ENCODE measurements at regions of chr5 and their contacts with region 1.

Region 1: DNA sequence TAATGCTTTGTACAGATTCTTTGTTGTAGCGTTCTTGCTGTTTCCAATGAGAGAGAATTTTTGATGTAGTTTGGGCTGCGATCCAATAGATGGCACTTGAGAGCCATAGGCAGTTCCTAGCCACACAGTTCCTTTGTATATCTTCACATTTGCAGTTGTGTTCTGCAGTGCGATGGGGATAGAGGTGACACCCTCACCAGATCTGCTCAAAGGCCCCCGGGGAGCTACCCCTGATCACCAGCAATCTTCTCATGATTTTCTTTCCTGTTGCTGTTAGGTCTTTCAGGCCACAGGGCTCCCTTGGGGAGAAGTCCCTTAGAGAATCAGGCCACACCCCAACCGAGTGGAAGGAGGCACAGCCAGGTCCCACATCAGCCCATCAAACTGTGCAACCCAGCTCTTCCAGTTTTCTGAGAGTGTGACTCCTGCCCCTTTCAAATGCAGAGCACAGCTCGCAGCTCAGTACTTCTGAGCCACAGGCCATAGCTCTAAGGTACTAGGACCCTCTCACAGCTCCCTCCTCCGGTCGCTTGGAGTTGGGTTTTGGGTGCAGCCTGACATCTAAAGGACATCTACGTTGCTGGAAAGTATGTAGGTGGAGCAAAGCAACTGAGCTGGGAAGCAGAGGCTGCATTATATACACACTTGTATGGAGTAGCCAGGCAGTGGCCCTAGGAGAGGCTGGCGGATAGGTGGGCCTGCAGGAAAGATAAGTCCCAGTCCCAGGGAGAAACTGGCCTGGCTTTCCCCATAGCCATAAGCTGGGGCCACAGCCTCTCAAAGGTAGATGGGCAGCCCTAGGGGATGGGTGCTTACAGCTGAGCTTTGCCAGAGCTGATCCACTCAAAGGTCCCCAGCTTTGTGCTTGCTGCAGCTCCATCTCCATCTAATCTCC is 353.5 kb downstream of the SLCO4C1 start:
- DNase-seq: no peak
- ATAC-seq: peak; percentile 42
- H3K4me3 ChIP-seq: no peak overlapping the region
- H3K4me3 Mint-ChIP-seq: no peak overlapping the region
- H3K27ac ChIP-seq: no peak overlapping the region
- H3K27ac Mint-ChIP-seq: no peak overlapping the region
- H3K4me1 ChIP-seq: no peaks in the 10 kb centered on the region
- H3K4me1 Mint-ChIP-seq: peaks cover 0 to 5% (median 0%) of the 10 kb centered on the region in 7 donors
- H3K27me3 ChIP-seq: no peaks in the 10 kb centered on the region
- H3K27me3 Mint-ChIP-seq: peaks cover 0 to 11% (median 0%) of the 10 kb centered on the region in 5 donors

Region 2: GRCh38 chr5:101929628-101930027 is 12.9 kb before region 1 on chr5:
- CTCF ChIA-PET with region 1: no interaction called
- POLR2A ChIA-PET with region 1: no interaction called
- intact Hi-C with region 1: no loop called
- DNase-seq: no peak
- ATAC-seq: no peak
- H3K4me3 ChIP-seq: no peak overlapping the region
- H3K4me3 Mint-ChIP-seq: no peak overlapping the region
- H3K27ac ChIP-seq: no peak overlapping the region
- H3K27ac Mint-ChIP-seq: no peak overlapping the region
- H3K4me1 ChIP-seq: no peaks in the 10 kb centered on the region
- H3K4me1 Mint-ChIP-seq: no peaks in the 10 kb centered on the region
- H3K27me3 ChIP-seq: no peaks in the 10 kb centered on the region
- H3K27me3 Mint-ChIP-seq: no peaks in the 10 kb centered on the region

Region 3: GRCh38 chr5:101977729-101978345 is 35.3 kb after region 1 on chr5:
- CTCF ChIA-PET with region 1: interaction called, 3 read pairs
- POLR2A ChIA-PET with region 1: no interaction called
- intact Hi-C with region 1: loop called in 1 of 2 experiments (anchors 1 kb)
- DNase-seq: peak in 3 of 9 donors; percentile 6 to 25 (median 9)
- ATAC-seq: no peak
- H3K4me3 ChIP-seq: no peak overlapping the region
- H3K4me3 Mint-ChIP-seq: no peak overlapping the region
- H3K27ac ChIP-seq: no peak overlapping the region
- H3K27ac Mint-ChIP-seq: no peak overlapping the region
- H3K4me1 ChIP-seq: no peaks in the 10 kb centered on the region
- H3K4me1 Mint-ChIP-seq: no peaks in the 10 kb centered on the region
- H3K27me3 ChIP-seq: no peaks in the 10 kb centered on the region
- H3K27me3 Mint-ChIP-seq: peaks cover 0 to 4% (median 0%) of the 10 kb centered on the region in 5 donors

Region 4: DNA sequence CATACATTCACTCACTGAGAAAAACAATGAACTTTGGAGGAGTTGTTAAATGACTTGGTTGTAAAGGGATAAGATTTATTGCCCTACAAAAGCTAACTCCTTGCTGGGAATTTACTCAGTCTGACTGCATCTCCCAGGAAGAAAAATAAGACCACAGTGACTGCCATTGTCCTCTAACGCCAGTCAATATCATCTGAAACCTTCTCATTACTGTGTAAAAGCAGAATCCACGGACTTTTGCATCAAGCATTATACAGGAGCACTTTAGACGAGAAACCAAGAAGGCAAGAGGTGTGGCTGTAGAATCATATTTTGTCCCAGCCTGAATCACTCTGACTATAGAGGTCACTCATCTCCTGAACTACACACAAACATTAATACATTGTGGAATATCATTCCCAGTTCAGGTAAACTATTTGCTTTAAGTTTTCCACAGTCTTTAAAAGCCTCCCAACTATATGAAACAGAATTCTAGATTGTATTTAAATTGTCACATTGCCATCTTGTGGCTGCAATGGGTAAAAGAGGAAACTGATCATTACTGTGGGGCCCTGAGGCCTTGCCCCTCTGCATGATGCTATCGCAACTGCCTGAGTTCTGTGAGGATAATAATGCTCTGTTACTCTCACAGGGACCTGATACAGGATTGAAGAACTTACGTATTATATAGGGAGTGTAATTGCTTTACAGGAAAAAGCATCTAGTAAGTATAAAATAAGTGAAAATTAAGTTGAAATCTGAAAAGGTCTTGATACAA is 210.6 kb after region 1 on chr5:
- CTCF ChIA-PET with region 1: no interaction called
- POLR2A ChIA-PET with region 1: no interaction called
- intact Hi-C with region 1: loop called in 1 of 2 experiments (anchors 5 kb)
- DNase-seq: peak in 3 of 9 donors; percentile 1 to 25 (median 1)
- ATAC-seq: peak; percentile 61
- H3K4me3 ChIP-seq: no peak overlapping the region
- H3K4me3 Mint-ChIP-seq: peak overlapping the region in 2 of 10 donors; percentile 19 to 46
- H3K27ac ChIP-seq: no peak overlapping the region
- H3K27ac Mint-ChIP-seq: peak overlapping the region in 1 of 9 donors; percentile 37
- H3K4me1 ChIP-seq: no peaks in the 10 kb centered on the region
- H3K4me1 Mint-ChIP-seq: no peaks in the 10 kb centered on the region
- H3K27me3 ChIP-seq: no peaks in the 10 kb centered on the region
- H3K27me3 Mint-ChIP-seq: peaks cover 0 to 5% (median 0%) of the 10 kb centered on the region in 5 donors

Region 5: GRCh38 chr5:102223542-102224477 is 281.2 kb after region 1 on chr5:
- CTCF ChIA-PET with region 1: no interaction called
- POLR2A ChIA-PET with region 1: no interaction called
- intact Hi-C with region 1: loop called in 1 of 2 experiments (anchors 1 kb)
- DNase-seq: peak in 5 of 9 donors; percentile 10 to 55 (median 37)
- ATAC-seq: no peak
- H3K4me3 ChIP-seq: no peak overlapping the region
- H3K4me3 Mint-ChIP-seq: no peak overlapping the region
- H3K27ac ChIP-seq: no peak overlapping the region
- H3K27ac Mint-ChIP-seq: no peak overlapping the region
- H3K4me1 ChIP-seq: no peaks in the 10 kb centered on the region
- H3K4me1 Mint-ChIP-seq: no peaks in the 10 kb centered on the region
- H3K27me3 ChIP-seq: peaks cover 0 to 5% of the 10 kb centered on the region in 2 donors
- H3K27me3 Mint-ChIP-seq: peaks cover 0 to 8% (median 2%) of the 10 kb centered on the region in 5 donors